HepG2 (cell line): ENCODE measurements at regions of chr19 and their contacts with region 1.

Region 1: GRCh38 chr19:45423589-45424190 is at the start of gene ERCC1:
- DNase-seq: peak; percentile 96
- ATAC-seq: peak; percentile 91
- H3K4me3 ChIP-seq: peak within 1 kb of the TSS; percentile 73 to 94 (median 83)
- H3K27ac ChIP-seq: peak within 1 kb of the TSS; percentile 87
- H3K4me1 ChIP-seq: peaks cover 40% of the 10 kb centered on the region
- H3K27me3 ChIP-seq: no peaks in the 10 kb centered on the region; a peak in 1 of 5 replicates
- CTCF ChIP-seq: peak; percentile 21; the same call in 1 of the 2 replicates
- EP300 ChIP-seq: 0 out of 4 replicates have a peak, but pooled peaks of 1 of the 2 experiments have one; percentile 17
- POLR2A ChIP-seq: peak; percentile 79; a peak in 3 of 4 replicates
- RAD21 ChIP-seq: no peak
- total RNA-seq, gene ERCC1: 39.3 and 40.0 TPM in 2 replicates

Region 2: DNA sequence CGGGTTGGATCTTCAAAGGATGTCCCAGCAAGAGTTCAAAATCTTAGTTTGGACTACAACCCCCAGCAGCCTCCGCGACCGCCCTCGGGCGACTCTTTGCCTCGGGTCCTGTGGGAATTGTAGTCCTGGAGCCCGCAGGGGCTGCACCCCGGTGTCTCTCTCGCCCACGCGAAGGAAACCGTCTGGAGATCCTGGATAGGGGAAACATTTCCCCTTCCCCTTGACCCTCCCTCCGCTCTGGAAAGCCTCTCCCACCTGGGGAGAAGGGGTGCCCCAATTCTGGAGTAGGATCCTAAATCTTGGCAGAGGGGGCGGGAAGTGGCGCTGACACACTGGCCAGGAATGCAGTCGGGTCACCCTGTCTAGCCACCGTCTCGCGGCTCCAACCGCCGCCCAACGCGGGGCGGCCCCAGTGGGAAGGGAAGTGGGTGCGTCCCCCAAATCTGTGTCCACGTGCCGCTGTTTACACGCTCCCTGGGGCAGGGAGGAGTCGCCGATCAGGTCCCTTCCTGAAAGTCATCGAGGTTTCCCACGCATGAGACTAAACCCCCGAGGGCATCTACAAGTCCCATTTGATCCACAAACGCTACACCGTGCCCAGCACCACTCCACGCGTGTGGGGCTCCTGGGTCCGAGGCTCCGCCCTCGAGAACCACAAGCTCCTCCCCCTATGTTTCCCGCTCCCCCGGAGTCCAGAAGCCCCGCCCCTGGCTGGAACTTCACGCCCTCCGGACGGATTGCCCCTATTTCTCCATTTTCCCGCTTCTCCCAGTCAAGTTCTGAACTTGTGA is 18.1 kb before region 1 on chr19:
- CTCF ChIA-PET with region 1: interaction called, 3 read pairs
- POLR2A ChIA-PET with region 1: interaction called, 3 read pairs
- in situ Hi-C with region 1: no loop called
- intact Hi-C with region 1: loop called (anchors 1 kb)
- DNase-seq: peak; percentile 81
- ATAC-seq: peak; percentile 81
- H3K4me3 ChIP-seq: peak overlapping the region; percentile 75 to 84 (median 84)
- H3K27ac ChIP-seq: peak overlapping the region; percentile 92
- H3K4me1 ChIP-seq: peaks cover 29% of the 10 kb centered on the region
- H3K27me3 ChIP-seq: no peaks in the 10 kb centered on the region; a peak in 1 of 5 replicates
- CTCF ChIP-seq: no peak
- EP300 ChIP-seq: 0 out of 4 replicates have a peak, but pooled peaks of 1 of the 2 experiments have one; percentile 3
- POLR2A ChIP-seq: peak; percentile 48 to 76; a peak in 2 of 4 replicates
- RAD21 ChIP-seq: 0 out of 2 replicates have a peak, but pooled peaks have one; percentile 4

Region 3: GRCh38 chr19:45478454-45479238 is 55.0 kb after region 1 on chr19:
- CTCF ChIA-PET with region 1: interaction called, 50 read pairs
- POLR2A ChIA-PET with region 1: interaction called, 6 read pairs
- in situ Hi-C with region 1: loop called (anchors 10 kb)
- intact Hi-C with region 1: loop called (anchors 1 kb)
- DNase-seq: peak; percentile 91
- ATAC-seq: peak; percentile 88
- H3K4me3 ChIP-seq: peak overlapping the region; percentile 60 to 70 (median 66)
- H3K27ac ChIP-seq: peak overlapping the region; percentile 90
- H3K4me1 ChIP-seq: peaks cover 36% of the 10 kb centered on the region
- H3K27me3 ChIP-seq: peaks cover 0 to 16% of the 10 kb centered on the region in 2 experiments; a peak in 2 of 5 replicates
- CTCF ChIP-seq: peak; percentile 93
- EP300 ChIP-seq: peak in 1 of 2 experiments; percentile 13; a peak in 1 of 4 replicates
- POLR2A ChIP-seq: 0 out of 4 replicates have a peak, but pooled peaks of 1 of the 2 experiments have one; percentile 38
- RAD21 ChIP-seq: peak; percentile 92

Region 4: GRCh38 chr19:45485305-45486077 is 61.8 kb after region 1 on chr19:
- CTCF ChIA-PET with region 1: interaction called, 50 read pairs
- POLR2A ChIA-PET with region 1: interaction called, 3 read pairs
- in situ Hi-C with region 1: no loop called
- intact Hi-C with region 1: no loop called
- DNase-seq: peak; percentile 93
- ATAC-seq: peak; percentile 97
- H3K4me3 ChIP-seq: peak overlapping the region; percentile 66 to 88 (median 76)
- H3K27ac ChIP-seq: peak overlapping the region; percentile 36
- H3K4me1 ChIP-seq: peaks cover 25% of the 10 kb centered on the region
- H3K27me3 ChIP-seq: peaks cover 0 to 6% of the 10 kb centered on the region in 2 experiments; a peak in 2 of 5 replicates
- CTCF ChIP-seq: peak; percentile 89
- EP300 ChIP-seq: peak in 1 of 2 experiments; percentile 4; a peak in 1 of 4 replicates
- POLR2A ChIP-seq: no peak
- RAD21 ChIP-seq: peak; percentile 29; the same call in 1 of the 2 replicates

Region 5: GRCh38 chr19:45584332-45585157 is 160.9 kb after region 1 on chr19 and contains the start of gene OPA3:
- CTCF ChIA-PET with region 1: no interaction called
- POLR2A ChIA-PET with region 1: no interaction called
- in situ Hi-C with region 1: no loop called
- intact Hi-C with region 1: loop called (anchors 2 kb)
- DNase-seq: peak; percentile 98
- ATAC-seq: peak; percentile 91
- H3K4me3 ChIP-seq: peak within 1 kb of the TSS; percentile 63 to 80 (median 74)
- H3K27ac ChIP-seq: peak within 1 kb of the TSS; percentile 100
- H3K4me1 ChIP-seq: peaks cover 52% of the 10 kb centered on the region
- H3K27me3 ChIP-seq: no peaks in the 10 kb centered on the region
- CTCF ChIP-seq: peak; percentile 25; the same call in 1 of the 2 replicates
- EP300 ChIP-seq: peak in 1 of 2 experiments; percentile 53; a peak in 1 of 4 replicates
- POLR2A ChIP-seq: peak; percentile 86 to 91
- RAD21 ChIP-seq: peak; percentile 29; the same call in 1 of the 2 replicates
- total RNA-seq, gene OPA3: 7.8 and 8.3 TPM in 2 replicates